B cell (primary cell): ENCODE measurements at regions of chr3 and their contacts with region 1.

Region 1: DNA sequence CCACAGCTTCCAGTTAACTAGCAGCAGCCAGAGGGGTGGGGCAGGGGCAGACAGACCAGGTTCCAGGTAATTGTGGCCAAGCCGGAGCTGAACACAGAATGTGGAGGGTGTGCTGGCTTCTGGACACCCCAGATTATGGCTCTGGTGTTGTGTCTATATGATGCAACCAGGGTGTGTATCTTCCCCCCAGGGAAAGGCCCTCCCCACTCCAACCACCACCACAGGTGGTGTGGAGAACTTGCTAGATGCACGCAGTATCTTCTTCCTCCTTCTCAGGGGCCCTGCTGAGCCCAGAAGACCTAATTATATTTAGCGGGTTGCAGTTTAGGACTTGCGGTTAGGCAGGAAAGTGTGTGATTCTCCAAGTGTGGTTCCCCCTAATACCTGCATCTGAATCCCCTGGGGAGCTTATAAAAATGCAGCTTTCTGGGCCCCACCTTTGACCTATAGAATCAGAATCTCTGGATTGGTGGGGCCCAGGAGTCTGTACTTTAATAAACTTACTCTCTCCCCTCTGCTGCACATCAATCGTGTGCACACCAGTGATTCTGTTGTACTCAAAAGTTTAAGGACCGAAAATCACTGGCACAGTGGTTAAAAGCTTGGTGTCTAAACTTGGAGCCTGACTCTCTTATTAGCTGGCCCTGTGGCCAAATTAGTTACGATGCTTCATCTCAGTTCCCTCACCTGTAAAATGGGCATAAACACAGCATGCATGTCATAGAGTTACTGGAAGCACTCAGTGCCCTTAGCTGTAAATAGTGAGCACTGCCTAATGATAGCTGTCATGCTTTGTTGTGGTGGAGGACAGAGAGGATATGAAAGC is 379.1 kb upstream of the PROK2 start:
- DNase-seq: peak; percentile 92
- ATAC-seq: peak; percentile 93
- H3K4me3 ChIP-seq: peak overlapping the region in 2 of 5 experiments; percentile 14 to 43
- H3K4me3 Mint-ChIP-seq: peak overlapping the region; percentile 75
- H3K27ac ChIP-seq: peak overlapping the region; percentile 83 to 86
- H3K27ac Mint-ChIP-seq: peak overlapping the region; percentile 61
- H3K4me1 ChIP-seq: peaks cover 47 to 52% of the 10 kb centered on the region in 2 donors
- H3K4me1 Mint-ChIP-seq: peaks cover 57% of the 10 kb centered on the region
- H3K27me3 ChIP-seq: peaks cover 0 to 2% (median 0%) of the 10 kb centered on the region in 4 experiments
- H3K27me3 Mint-ChIP-seq: peaks cover 12% of the 10 kb centered on the region
- CTCF ChIP-seq: no peak

Region 2: GRCh38 chr3:72082186-72082715 is 81.8 kb before region 1 on chr3:
- CTCF ChIA-PET with region 1: interaction called, 3 read pairs
- POLR2A ChIA-PET with region 1: no interaction called
- intact Hi-C with region 1: loop called (anchors 5 kb)
- DNase-seq: peak; percentile 89
- ATAC-seq: peak; percentile 84
- H3K4me3 ChIP-seq: peak overlapping the region in 4 of 5 experiments; percentile 3 to 31 (median 12)
- H3K4me3 Mint-ChIP-seq: peak overlapping the region; percentile 61
- H3K27ac ChIP-seq: peak overlapping the region; percentile 43 to 66
- H3K27ac Mint-ChIP-seq: peak overlapping the region; percentile 47
- H3K4me1 ChIP-seq: peaks cover 65 to 73% of the 10 kb centered on the region in 2 donors
- H3K4me1 Mint-ChIP-seq: peaks cover 71% of the 10 kb centered on the region
- H3K27me3 ChIP-seq: peaks cover 0 to 12% (median 4%) of the 10 kb centered on the region in 4 experiments
- H3K27me3 Mint-ChIP-seq: peaks cover 8% of the 10 kb centered on the region
- CTCF ChIP-seq: no peak

Region 3: GRCh38 chr3:72177083-72178050 is 13.3 kb after region 1 on chr3:
- CTCF ChIA-PET with region 1: interaction called, 3 read pairs
- POLR2A ChIA-PET with region 1: no interaction called
- intact Hi-C with region 1: loop called (anchors 1 kb)
- DNase-seq: peak; percentile 61
- ATAC-seq: peak; percentile 40
- H3K4me3 ChIP-seq: peak overlapping the region in 4 of 5 experiments; percentile 20 to 61 (median 36)
- H3K4me3 Mint-ChIP-seq: peak overlapping the region; percentile 88
- H3K27ac ChIP-seq: no peak overlapping the region
- H3K27ac Mint-ChIP-seq: peak overlapping the region; percentile 70
- H3K4me1 ChIP-seq: peaks cover 50 to 52% of the 10 kb centered on the region in 2 donors
- H3K4me1 Mint-ChIP-seq: peaks cover 65% of the 10 kb centered on the region
- H3K27me3 ChIP-seq: no peaks in the 10 kb centered on the region
- H3K27me3 Mint-ChIP-seq: peaks cover 13% of the 10 kb centered on the region
- CTCF ChIP-seq: no peak

Region 4: DNA sequence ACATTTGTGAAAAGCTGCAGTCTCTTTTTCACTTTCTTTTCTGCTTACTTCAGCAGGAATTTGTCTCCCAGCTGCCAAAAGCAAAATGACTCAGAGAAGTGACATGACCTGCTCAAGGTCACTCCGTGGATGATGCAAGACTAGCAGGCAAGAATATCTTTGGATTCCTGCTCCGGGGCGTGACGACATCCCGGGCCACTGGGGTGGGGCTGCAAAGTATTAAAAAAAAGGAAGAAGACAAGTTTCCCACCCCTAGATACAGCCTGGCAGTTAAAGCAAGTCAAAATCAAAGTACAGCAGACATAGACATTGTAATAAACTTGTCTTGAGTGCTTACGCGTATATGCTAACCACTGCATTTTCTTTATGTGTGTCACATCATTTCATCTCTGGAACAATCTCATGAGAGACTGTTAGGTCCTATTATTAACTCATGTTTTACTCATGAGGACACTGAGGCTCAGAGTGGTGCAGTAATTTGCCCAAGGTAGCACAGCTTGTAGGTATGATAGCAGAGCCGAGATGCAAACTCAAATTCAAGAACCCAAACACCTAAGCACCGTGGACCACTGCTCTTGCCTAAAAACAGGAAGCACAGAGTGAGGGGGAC is 106.2 kb after region 1 on chr3:
- CTCF ChIA-PET with region 1: no interaction called
- POLR2A ChIA-PET with region 1: no interaction called
- intact Hi-C with region 1: loop called (anchors 2 kb)
- DNase-seq: no peak
- ATAC-seq: no peak
- H3K4me3 ChIP-seq: peak overlapping the region in 2 of 5 experiments; percentile 5 to 6
- H3K4me3 Mint-ChIP-seq: peak overlapping the region; percentile 64
- H3K27ac ChIP-seq: no peak overlapping the region
- H3K27ac Mint-ChIP-seq: no peak overlapping the region
- H3K4me1 ChIP-seq: peaks cover 78 to 83% of the 10 kb centered on the region in 2 donors
- H3K4me1 Mint-ChIP-seq: peaks cover 91% of the 10 kb centered on the region
- H3K27me3 ChIP-seq: peaks cover 0 to 9% (median 0%) of the 10 kb centered on the region in 4 experiments
- H3K27me3 Mint-ChIP-seq: peaks cover 8% of the 10 kb centered on the region
- CTCF ChIP-seq: no peak

Region 5: GRCh38 chr3:72310419-72311380 is 146.7 kb after region 1 on chr3:
- CTCF ChIA-PET with region 1: no interaction called
- POLR2A ChIA-PET with region 1: no interaction called
- intact Hi-C with region 1: loop called (anchors 1 kb)
- DNase-seq: peak; percentile 89
- ATAC-seq: peak; percentile 98
- H3K4me3 ChIP-seq: peak overlapping the region; percentile 7 to 53 (median 18)
- H3K4me3 Mint-ChIP-seq: peak overlapping the region; percentile 82
- H3K27ac ChIP-seq: peak overlapping the region; percentile 76 to 88
- H3K27ac Mint-ChIP-seq: peak overlapping the region; percentile 90
- H3K4me1 ChIP-seq: peaks cover 42 to 46% of the 10 kb centered on the region in 2 donors
- H3K4me1 Mint-ChIP-seq: peaks cover 55% of the 10 kb centered on the region
- H3K27me3 ChIP-seq: no peaks in the 10 kb centered on the region
- H3K27me3 Mint-ChIP-seq: no peaks in the 10 kb centered on the region
- CTCF ChIP-seq: no peak

Region 6: DNA sequence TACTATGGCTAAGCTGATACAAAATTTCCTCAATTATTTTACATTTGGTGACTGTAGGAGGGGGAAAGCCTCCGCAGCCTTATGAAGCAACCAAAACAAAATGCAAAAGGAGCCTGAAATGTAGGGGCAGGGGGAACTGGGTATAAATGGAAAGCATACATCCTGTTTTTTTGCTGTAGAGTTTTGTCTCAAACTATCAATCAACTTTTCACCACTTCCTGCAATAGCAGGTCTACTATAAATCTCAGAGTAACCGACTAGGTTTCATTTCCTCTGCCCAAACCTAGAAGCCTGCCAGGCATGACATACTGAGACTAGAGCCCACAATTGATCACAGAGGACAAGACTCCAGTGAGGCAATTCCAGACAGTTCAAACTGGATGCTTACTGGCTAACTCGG is 592.9 kb after region 1 on chr3:
- CTCF ChIA-PET with region 1: no interaction called
- POLR2A ChIA-PET with region 1: no interaction called
- intact Hi-C with region 1: loop called (anchors 10 kb)
- DNase-seq: peak; percentile 84
- ATAC-seq: peak; percentile 98
- H3K4me3 ChIP-seq: peak overlapping the region in 4 of 5 experiments; percentile 19 to 55 (median 32)
- H3K4me3 Mint-ChIP-seq: peak overlapping the region; percentile 61
- H3K27ac ChIP-seq: no peak overlapping the region
- H3K27ac Mint-ChIP-seq: peak overlapping the region; percentile 22
- H3K4me1 ChIP-seq: peaks cover 22 to 28% of the 10 kb centered on the region in 2 donors
- H3K4me1 Mint-ChIP-seq: peaks cover 28% of the 10 kb centered on the region
- H3K27me3 ChIP-seq: peaks cover 0 to 40% (median 21%) of the 10 kb centered on the region in 4 experiments
- H3K27me3 Mint-ChIP-seq: peaks cover 59% of the 10 kb centered on the region
- CTCF ChIP-seq: no peak